H1 (cell line): ENCODE measurements at regions of chr2 and their contacts with region 1.

Region 1: GRCh38 chr2:20424300-20425290 is 22.3 kb upstream of the RHOB start:
- DNase-seq: no peak
- H3K4me3 ChIP-seq: no peak overlapping the region
- H3K27ac ChIP-seq: no peak overlapping the region; the same call in 1 of the 2 replicates
- H3K4me1 ChIP-seq: no peaks in the 10 kb centered on the region; a peak in 1 of 7 replicates
- H3K27me3 ChIP-seq: no peaks in the 10 kb centered on the region
- CTCF ChIP-seq: no peak
- EP300 ChIP-seq: no peak
- POLR2A ChIP-seq: no peak
- RAD21 ChIP-seq: no peak

Region 2: DNA sequence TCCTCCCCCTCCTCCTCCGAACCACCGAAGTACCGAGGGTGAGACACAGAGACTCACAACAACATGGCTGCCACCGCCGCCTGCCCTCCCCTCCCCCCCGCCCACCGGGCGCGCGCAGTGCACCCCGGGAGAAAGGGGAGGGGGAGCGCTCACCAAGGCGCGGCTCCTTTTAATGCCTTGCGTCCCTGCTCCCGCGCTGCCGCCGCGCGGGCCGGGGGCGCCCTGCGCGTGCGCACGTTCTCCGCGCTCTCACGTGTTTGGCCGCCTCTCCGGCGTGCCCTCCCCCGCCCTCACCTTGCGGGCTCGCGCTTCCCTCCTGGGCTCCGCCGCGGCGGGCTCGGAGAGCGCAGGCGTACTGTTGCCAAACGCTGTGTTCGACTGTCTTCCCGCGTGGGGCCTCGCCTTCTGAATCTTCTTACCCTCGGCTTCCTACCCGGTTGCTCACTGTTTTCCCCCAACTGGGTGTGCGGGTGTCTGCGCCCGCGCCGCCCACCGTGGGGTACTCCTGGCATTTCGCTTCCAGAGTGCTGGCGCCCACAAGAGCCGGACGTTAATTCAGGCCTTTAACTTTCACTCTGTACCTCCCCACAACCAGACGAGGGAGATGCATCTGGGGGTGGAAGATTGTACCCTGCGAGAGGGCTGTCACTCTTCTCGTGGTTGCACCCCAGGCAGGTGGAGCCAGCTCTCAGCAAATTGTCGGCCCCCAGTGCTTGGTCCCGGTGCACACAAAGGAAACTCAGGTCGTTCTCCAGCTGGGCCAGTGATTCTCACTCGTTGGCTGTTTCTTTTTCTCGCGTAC is 73.6 kb before region 1 on chr2 and contains the start of gene PUM2:
- CTCF ChIA-PET with region 1: interaction called, 11 read pairs
- POLR2A ChIA-PET with region 1: no interaction called
- DNase-seq: peak; percentile 89 to 90
- H3K4me3 ChIP-seq: peak within 1 kb of the TSS; percentile 84 to 100 (median 92)
- H3K27ac ChIP-seq: peak within 1 kb of the TSS; percentile 100
- H3K4me1 ChIP-seq: peaks cover 5 to 15% (median 12%) of the 10 kb centered on the region in 4 experiments
- H3K27me3 ChIP-seq: no peaks in the 10 kb centered on the region
- CTCF ChIP-seq: no peak
- EP300 ChIP-seq: no peak; a peak in 1 of 3 replicates
- POLR2A ChIP-seq: peak; percentile 73 to 84; a peak in 2 of 3 replicates
- RAD21 ChIP-seq: no peak
- total RNA-seq, gene PUM2: 109 and 114 TPM in 2 replicates

Region 3: DNA sequence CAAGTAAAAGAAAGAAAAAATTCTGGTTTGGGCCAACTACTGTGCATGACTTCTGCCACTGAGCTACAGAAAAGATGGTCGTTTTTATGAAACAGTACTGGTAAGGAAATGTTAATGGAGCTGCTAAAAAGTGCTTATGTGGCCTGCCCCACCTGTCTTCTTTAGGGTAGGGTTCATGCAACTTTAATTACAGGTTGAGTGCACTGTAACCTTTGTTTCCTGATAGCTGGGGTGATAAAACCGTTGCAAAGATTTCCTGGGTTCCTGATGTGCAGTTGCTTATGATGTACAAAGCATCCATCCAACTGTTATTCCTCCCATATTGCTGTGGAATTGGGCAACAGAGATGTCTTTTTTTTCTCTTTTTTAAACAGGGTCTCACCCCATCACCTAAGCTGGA is 39.6 kb before region 1 on chr2:
- CTCF ChIA-PET with region 1: interaction called, 61 read pairs
- POLR2A ChIA-PET with region 1: no interaction called
- DNase-seq: no peak
- H3K4me3 ChIP-seq: no peak overlapping the region
- H3K27ac ChIP-seq: no peak overlapping the region
- H3K4me1 ChIP-seq: peaks cover 0 to 4% (median 0%) of the 10 kb centered on the region in 4 experiments; a peak in 2 of 7 replicates
- H3K27me3 ChIP-seq: no peaks in the 10 kb centered on the region
- CTCF ChIP-seq: no peak
- EP300 ChIP-seq: no peak
- POLR2A ChIP-seq: no peak
- RAD21 ChIP-seq: no peak

Region 4: DNA sequence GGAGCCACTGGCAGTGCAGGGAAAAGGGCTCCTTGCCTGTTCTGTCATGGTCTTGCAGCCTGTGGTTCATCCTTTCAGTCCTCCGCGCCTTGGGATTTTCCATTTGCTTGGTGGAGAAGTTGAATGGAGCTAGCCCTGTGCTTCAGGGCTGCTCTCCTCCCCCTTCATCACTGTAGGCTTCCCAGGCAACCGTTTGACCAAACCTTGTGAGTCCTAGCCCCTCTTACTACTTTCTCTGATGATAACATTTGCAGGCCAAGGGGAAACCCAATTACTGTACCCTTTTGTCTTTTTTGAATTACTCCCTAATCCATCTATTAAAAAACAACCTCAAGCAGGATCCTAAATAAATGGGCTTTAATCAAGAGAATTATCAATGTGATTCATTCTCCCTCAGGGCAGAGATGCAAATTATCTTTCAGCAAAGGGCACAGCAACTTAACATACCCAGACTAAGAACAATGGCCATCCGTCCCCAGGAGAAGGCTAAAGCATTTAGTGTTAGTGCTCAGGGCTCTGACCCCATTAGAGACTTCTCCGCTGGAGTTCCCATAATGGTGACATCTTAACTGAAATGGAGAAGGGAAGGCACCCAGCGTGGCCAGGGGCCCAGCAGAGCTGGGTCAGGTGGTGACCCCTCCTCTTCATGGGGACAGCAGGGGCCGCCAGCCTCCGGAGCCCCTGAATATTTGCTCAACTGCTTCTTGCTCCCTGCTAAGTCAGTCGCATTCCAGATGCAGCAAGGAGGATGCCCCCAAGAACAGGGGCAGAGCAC is 63.0 kb after region 1 on chr2:
- CTCF ChIA-PET with region 1: no interaction called
- POLR2A ChIA-PET with region 1: no interaction called
- DNase-seq: peak; percentile 7 to 59
- H3K4me3 ChIP-seq: peak overlapping the region in 1 of 4 experiments; percentile 1; a peak in 1 of 8 replicates
- H3K27ac ChIP-seq: no peak overlapping the region
- H3K4me1 ChIP-seq: peaks cover 9 to 16% (median 14%) of the 10 kb centered on the region in 4 experiments
- H3K27me3 ChIP-seq: no peaks in the 10 kb centered on the region
- CTCF ChIP-seq: no peak
- EP300 ChIP-seq: no peak
- POLR2A ChIP-seq: no peak
- RAD21 ChIP-seq: 0 out of 4 replicates have a peak, but pooled peaks of 1 of the 2 experiments have one; percentile 5